Heart left ventricle (tissue), 16 donors: ENCODE measurements at regions of chr3 and their contacts with region 1.

Region 1: GRCh38 chr3:37139567-37140052 is 34.8 kb downstream of the LRRFIP2 start:
- DNase-seq: no peak
- ATAC-seq: peak; percentile 23 to 87 (median 58)
- H3K4me3 ChIP-seq: no peak overlapping the region
- H3K27ac ChIP-seq: peak overlapping the region in 8 of 12 donors; percentile 0 to 65 (median 44)
- H3K4me1 ChIP-seq: peaks cover 0 to 48% (median 19%) of the 10 kb centered on the region in 12 donors
- H3K27me3 ChIP-seq: no peaks in the 10 kb centered on the region
- CTCF ChIP-seq: no peak
- POLR2A ChIP-seq: no peak

Region 2: DNA sequence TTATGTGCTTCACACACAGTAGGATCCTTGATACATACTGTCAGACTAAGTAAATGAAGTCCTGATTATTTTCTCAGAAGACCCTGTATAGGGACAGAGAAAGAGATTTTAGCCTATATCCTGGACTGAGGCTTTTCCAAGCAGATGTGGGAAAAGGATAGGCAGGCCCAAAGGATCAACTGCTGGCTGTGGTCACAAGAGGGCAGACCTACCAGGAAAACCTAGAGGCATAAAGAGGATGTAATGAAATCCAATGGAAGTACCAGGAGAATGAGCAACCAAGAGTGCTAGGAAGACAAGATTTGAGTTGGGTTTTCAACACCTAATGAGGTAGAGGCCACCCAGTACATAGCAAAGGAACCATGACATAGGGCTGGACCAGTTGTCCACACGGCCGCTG is 398.3 kb before region 1 on chr3:
- intact Hi-C with region 1: loop called in 1 of 10 experiments (anchors 5 kb)
- DNase-seq: no peak
- ATAC-seq: no peak
- H3K4me3 ChIP-seq: no peak overlapping the region
- H3K27ac ChIP-seq: no peak overlapping the region
- H3K4me1 ChIP-seq: peaks cover 0 to 17% (median 4%) of the 10 kb centered on the region in 12 donors
- H3K27me3 ChIP-seq: no peaks in the 10 kb centered on the region
- CTCF ChIP-seq: peak in 5 of 12 donors; percentile 10 to 33 (median 25)
- POLR2A ChIP-seq: no peak

Region 3: GRCh38 chr3:37096288-37096687 is 43.3 kb before region 1 on chr3:
- intact Hi-C with region 1: no loop called
- DNase-seq: no peak
- ATAC-seq: peak in 2 of 4 donors; percentile 30 to 54
- H3K4me3 ChIP-seq: no peak overlapping the region
- H3K27ac ChIP-seq: peak overlapping the region in 10 of 12 donors; percentile 27 to 64 (median 32)
- H3K4me1 ChIP-seq: peaks cover 0 to 37% (median 19%) of the 10 kb centered on the region in 12 donors
- H3K27me3 ChIP-seq: no peaks in the 10 kb centered on the region
- CTCF ChIP-seq: no peak
- POLR2A ChIP-seq: no peak

Region 4: DNA sequence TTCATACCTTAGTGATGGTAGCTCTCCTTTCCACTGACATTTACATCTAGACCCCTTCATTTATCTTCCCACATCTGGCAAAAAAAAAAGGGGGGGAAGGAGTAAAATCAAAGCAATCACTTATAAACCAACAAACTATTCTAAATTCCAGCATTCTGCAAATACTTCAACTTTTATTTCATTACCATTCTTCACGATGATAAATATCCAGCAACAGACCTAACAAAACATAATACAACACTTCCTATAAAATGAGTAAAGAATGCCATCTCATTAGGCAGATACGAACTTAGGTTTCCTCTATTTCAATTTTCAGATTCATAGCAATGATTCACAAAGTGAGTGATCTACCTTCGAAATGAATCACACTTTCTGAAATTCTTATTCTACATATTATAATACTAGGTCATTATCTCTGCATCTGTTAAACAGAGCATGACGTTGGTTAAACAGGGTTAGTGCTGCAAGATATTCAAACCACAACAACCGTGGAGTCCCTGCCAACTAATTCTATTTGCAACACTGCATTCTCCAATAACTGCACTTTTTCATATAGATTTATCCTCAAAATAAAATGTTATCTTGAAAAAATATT is 35.0 kb after region 1 on chr3 and contains the start of gene LRRFIP2:
- intact Hi-C with region 1: loop called in 1 of 10 experiments (anchors 5 kb)
- DNase-seq: no peak
- ATAC-seq: no peak
- H3K4me3 ChIP-seq: peak within 1 kb of the TSS; percentile 86 to 99 (median 96)
- H3K27ac ChIP-seq: peak within 1 kb of the TSS; percentile 88 to 99 (median 98)
- H3K4me1 ChIP-seq: peaks cover 6 to 79% (median 57%) of the 10 kb centered on the region in 12 donors
- H3K27me3 ChIP-seq: no peaks in the 10 kb centered on the region
- CTCF ChIP-seq: no peak
- POLR2A ChIP-seq: no peak
- total RNA-seq, gene LRRFIP2: 85.5 to 161 (median 114) TPM

Region 5: DNA sequence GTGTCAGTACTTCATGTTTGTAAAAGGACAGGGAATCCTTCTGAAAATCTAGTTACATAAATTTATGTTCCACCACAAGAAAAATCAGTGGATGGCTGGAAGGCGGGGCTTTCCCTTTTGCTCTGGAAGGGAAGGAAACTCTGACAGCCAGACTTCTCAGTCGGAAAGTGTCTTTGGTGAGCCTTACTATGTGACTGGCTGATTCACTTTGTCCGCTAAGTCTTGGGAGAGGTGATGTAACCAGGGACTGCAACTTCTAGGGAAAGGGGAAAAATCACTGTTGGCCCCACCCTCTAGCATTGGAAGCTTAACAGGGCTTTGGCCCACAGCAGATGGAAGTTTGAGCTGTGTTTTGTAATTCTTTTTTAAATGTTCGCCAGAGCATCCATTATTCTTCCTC is 440.6 kb after region 1 on chr3:
- intact Hi-C with region 1: no loop called
- DNase-seq: peak in 2 of 5 donors; percentile 39 to 40
- ATAC-seq: peak; percentile 53 to 90 (median 86)
- H3K4me3 ChIP-seq: no peak overlapping the region
- H3K27ac ChIP-seq: peak overlapping the region in 5 of 12 donors; percentile 15 to 60 (median 25)
- H3K4me1 ChIP-seq: peaks cover 0 to 34% (median 15%) of the 10 kb centered on the region in 12 donors
- H3K27me3 ChIP-seq: no peaks in the 10 kb centered on the region
- CTCF ChIP-seq: no peak
- POLR2A ChIP-seq: no peak